SK-N-SH (cell line): ENCODE measurements at regions of chr11 and their contacts with region 1.

Region 1: GRCh38 chr11:69918938-69919650 is 99.9 kb upstream of the FGF3 start:
- DNase-seq: peak; percentile 89
- H3K4me3 ChIP-seq: peak overlapping the region in 1 of 2 experiments; percentile 54; a peak in 1 of 4 replicates
- H3K27ac ChIP-seq: no peak overlapping the region
- H3K4me1 ChIP-seq: peaks cover 0 to 10% of the 10 kb centered on the region in 2 experiments; a peak in 1 of 4 replicates
- H3K27me3 ChIP-seq: no peaks in the 10 kb centered on the region
- CTCF ChIP-seq: peak; percentile 89
- EP300 ChIP-seq: no peak
- RAD21 ChIP-seq: peak; percentile 80

Region 2: DNA sequence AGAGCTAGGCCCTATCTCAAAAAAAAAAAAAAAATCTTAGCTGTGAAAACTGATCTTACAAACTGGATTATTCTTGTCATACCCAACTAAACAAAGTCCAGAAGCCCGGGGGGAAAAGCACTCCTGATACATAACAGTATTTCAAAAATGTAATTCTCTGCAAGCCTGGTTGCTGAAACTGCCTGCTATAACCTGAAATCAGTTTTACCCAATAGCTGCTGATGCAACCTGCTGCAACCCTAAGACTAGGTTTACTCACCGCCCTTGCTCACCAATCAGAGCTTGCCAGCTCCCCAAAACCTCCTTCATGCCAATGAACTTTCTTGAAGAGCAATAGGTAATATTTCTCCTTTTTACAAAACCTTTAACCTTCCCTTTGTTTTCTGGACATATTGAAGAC is 227.6 kb before region 1 on chr11:
- CTCF ChIA-PET with region 1: interaction called, 15 read pairs
- POLR2A ChIA-PET with region 1: no interaction called
- DNase-seq: no peak
- H3K4me3 ChIP-seq: no peak overlapping the region
- H3K27ac ChIP-seq: no peak overlapping the region
- H3K4me1 ChIP-seq: no peaks in the 10 kb centered on the region
- H3K27me3 ChIP-seq: peaks cover 6% of the 10 kb centered on the region; the same call in 1 of the 2 replicates
- CTCF ChIP-seq: no peak
- EP300 ChIP-seq: no peak
- RAD21 ChIP-seq: no peak

Region 3: DNA sequence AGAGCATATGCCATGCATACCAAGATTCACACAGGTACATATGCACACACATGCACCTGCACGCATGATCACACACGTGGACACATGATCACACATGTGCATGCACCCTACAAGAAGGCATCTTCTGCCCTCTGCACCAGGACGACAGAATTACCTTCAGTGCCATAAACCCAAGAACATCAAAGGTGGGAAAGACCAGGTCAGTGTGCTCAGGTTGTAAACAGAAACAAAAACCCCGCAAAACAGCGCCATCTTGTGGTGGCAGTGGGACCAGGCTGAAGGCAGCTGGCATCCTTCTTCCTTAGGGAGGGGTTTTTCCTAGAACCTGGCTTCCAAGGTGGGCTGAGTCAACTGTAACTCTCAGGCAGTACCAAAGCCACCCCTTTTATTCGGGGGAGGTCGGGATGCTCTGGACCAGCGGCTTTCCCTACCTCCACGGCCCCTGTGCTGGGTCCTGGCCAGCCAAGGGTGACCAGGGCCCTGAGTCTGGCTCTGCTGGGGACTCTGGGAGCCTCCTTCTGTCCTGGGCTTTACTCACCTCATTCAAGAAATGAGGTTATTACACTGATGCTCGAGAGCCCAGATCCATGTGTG is 30.5 kb before region 1 on chr11:
- CTCF ChIA-PET with region 1: interaction called, 249 read pairs
- POLR2A ChIA-PET with region 1: no interaction called
- DNase-seq: peak; percentile 90
- H3K4me3 ChIP-seq: peak overlapping the region in 1 of 2 experiments; percentile 19; a peak in 1 of 4 replicates
- H3K27ac ChIP-seq: no peak overlapping the region; a peak in 1 of 4 replicates
- H3K4me1 ChIP-seq: peaks cover 0 to 21% of the 10 kb centered on the region in 2 experiments; a peak in 2 of 4 replicates
- H3K27me3 ChIP-seq: 0 out of 2 replicates have a peak, but pooled peaks cover 8% of the 10 kb centered on the region
- CTCF ChIP-seq: peak; percentile 91
- EP300 ChIP-seq: no peak
- RAD21 ChIP-seq: peak; percentile 75

Region 4: DNA sequence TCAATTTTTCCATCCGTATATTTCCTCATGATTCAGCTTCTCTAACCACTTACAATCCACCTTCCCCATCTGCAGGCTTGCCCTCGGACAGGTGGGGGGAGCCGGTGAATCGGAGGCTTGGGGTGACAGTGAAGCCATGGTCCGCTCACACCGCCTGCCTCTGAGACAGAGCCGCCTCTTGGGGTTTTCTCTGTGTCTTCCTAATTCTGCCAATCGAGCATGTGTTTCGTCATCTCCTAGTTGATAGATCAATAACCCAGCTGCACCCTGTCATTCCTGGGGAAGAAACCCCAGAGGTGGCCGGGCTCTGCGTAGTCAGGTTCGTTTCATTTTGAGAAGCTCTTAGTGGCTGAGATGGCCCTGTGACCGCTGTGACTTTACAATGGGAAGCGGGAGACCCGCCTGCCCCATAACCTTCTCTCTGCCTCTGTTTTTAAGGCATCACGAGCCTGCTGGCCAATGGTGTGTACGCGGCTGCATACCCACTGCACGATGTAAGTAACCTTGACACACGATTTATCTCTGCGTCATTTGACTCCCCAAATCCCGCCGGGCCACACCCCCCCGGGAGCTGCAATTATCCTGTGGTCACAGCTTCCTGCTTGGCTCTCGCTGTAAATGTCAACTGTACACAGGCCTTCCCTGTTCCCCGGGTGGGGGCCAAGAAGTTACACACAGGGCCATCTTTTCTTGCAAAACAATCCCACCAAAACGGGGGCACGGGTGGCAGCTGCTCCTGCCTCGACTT is 192.3 kb after region 1 on chr11:
- CTCF ChIA-PET with region 1: interaction called, 12 read pairs
- POLR2A ChIA-PET with region 1: no interaction called
- DNase-seq: no peak
- H3K4me3 ChIP-seq: no peak overlapping the region
- H3K27ac ChIP-seq: no peak overlapping the region
- H3K4me1 ChIP-seq: peaks cover 0 to 2% of the 10 kb centered on the region in 2 experiments; a peak in 2 of 4 replicates
- H3K27me3 ChIP-seq: no peaks in the 10 kb centered on the region
- CTCF ChIP-seq: no peak
- EP300 ChIP-seq: no peak
- RAD21 ChIP-seq: no peak

Region 5: DNA sequence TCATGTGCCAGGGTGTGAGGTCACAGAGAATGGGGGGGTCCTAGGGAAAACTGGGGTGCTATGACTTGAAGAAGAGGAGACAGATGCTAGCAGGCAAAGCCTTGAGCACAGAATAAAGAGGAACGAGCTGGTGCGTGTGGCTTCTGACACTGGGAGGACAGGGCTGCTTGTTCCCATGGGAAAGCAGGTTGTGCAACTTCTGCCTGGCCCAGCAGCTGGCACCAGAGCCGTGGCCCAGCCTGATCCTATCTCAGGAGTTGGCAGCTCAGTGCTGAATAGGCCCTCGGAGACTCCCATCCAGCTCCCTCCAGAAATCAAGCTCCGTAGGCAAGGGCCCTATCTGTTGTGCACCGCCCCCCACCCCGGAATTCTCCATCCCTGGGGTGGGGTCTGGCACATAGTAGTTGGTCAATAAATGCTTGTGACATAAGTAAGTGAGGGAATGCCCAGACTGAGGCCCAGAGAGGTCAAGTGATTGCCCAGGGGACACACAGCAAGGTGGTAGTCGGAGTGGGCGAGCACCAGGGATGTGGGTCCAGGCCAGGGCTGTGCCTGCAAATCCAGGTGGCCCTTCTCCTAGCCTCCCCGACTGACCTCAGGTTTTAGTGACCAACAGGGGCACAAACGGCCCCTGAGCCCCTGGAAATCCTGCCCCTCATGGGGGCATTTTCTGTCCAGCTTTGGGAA is 264.5 kb after region 1 on chr11:
- CTCF ChIA-PET with region 1: interaction called, 24 read pairs
- POLR2A ChIA-PET with region 1: no interaction called
- DNase-seq: no peak
- H3K4me3 ChIP-seq: no peak overlapping the region
- H3K27ac ChIP-seq: no peak overlapping the region
- H3K4me1 ChIP-seq: no peaks in the 10 kb centered on the region
- H3K27me3 ChIP-seq: peaks cover 14% of the 10 kb centered on the region
- CTCF ChIP-seq: no peak
- EP300 ChIP-seq: no peak
- RAD21 ChIP-seq: no peak